ENCODE measurements at regions of chr20 and their contacts with region 1.

Region 1: GRCh38 chr20:58149437-58150105 is 78.9 kb downstream of the ANKRD60 start:
- DNase-seq: no peak
- H3K4me3 ChIP-seq: no peak overlapping the region
- H3K27ac ChIP-seq: peak overlapping the region; percentile 65 to 93
- H3K4me1 ChIP-seq: peaks cover 14 to 46% of the 10 kb centered on the region in 2 donors
- H3K27me3 ChIP-seq: no peaks in the 10 kb centered on the region
- CTCF ChIP-seq: no peak

Region 2: DNA sequence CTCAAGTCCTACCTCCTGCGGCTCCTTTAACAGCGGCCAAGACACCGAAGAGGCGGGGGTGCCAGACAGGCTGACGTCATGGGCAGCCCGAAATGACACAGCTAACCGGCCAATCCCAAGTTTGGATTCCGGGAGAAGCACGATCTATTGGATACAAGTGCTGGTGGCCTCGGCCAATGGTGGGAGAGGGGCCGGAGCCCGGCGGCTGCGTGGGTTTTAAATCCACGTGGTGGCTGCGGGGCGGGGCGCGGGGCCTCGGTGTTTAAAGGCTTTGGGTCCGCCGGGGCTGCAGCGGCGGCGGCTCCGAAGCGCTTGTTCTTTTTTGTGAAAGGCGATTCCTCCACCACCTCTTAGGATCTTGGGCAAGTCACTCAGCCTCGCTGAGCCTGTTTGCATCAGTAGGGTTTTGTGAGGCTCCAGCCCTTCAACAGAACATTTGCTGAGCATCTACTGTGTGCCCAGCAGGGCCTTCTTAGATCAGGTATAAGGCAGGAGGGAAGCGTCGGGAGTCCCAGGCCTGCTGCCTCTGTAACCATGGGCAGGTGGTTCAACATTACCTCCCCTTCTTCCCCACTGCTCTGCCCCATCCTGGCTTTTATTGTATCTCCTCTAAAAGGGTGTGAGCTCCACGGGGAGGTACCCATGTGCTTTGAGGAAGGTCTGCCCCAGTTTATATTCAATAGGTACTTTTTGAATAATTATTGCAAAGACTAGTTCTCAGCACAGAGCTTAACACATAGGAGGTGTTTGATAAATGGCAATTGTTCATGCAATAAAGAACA is 430.9 kb before region 1 on chr20:
- intact Hi-C with region 1: loop called (anchors 5 kb)
- DNase-seq: peak; percentile 95 to 99
- H3K4me3 ChIP-seq: peak overlapping the region; percentile 38 to 44
- H3K27ac ChIP-seq: peak overlapping the region; percentile 52 to 53
- H3K4me1 ChIP-seq: peaks cover 29 to 53% of the 10 kb centered on the region in 2 donors
- H3K27me3 ChIP-seq: no peaks in the 10 kb centered on the region
- CTCF ChIP-seq: no peak

Region 3: DNA sequence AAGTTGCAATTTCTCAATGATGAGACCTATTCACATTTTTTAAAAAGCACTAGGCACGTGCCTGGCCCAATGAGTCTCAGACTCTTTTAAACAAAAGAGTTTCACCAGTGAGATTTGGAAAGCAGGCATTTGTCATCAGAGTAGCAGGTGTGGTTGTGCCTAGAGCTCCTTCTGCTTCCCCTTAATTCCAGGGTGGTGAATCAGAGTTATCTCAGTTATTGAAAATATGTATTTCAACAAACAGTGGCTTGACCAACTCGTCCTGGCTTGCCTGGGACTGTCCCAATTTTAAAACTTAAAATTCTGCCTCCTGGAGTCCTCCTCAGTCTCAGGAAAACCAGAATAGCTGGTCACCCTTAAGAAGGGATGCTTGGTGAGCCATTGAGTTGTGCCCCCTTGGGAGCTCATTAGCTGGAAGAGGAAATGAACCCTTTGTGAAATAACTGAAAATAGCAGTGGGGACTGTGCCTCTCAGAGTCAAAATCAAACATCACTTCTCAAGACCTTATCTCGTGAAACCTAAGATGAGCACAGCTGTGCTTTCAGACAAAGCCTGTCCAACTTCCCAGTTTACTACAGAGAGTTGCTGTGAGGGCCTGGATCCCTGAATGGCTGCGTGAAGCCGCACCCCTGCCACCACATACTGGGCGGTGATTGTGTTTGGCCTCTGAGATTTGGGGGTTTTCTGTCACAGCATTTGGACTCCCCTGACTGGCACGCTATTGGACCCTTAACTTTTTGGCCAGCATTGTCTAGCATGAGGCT is 37.4 kb before region 1 on chr20:
- intact Hi-C with region 1: loop called (anchors 2 kb)
- DNase-seq: no peak
- H3K4me3 ChIP-seq: no peak overlapping the region
- H3K27ac ChIP-seq: peak overlapping the region; percentile 35 to 63
- H3K4me1 ChIP-seq: peaks cover 3 to 14% of the 10 kb centered on the region in 2 donors
- H3K27me3 ChIP-seq: no peaks in the 10 kb centered on the region
- CTCF ChIP-seq: no peak

Region 4: DNA sequence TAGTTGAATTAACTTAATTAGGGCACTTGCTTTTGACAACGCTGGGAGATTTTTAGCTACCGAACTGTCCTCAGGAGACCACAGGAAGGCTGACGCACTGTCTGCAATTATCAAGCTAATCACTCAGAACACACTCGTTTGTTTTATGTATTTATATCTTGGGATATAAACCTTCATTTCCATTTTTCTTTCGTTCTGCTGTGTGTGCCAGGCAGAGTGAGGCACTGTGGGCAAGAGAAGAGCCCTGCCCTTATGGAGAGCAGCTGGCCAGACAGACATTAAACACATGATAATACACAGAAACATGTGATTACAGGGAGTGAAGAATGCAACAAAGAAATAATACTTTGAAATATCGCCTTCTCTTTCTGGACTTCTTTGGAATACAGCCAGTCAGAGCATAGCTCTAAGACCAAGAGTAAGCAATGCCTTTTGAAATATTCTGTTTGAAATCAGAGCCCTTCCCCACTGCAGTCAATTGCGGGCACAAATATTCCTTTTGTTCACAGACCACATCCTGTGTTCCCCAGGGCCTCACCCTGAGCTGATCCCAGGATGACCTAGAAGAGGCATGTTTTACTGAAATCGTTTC is 17.9 kb before region 1 on chr20:
- intact Hi-C with region 1: loop called (anchors 2 kb)
- DNase-seq: no peak
- H3K4me3 ChIP-seq: peak overlapping the region in 1 of 2 donors; percentile 13
- H3K27ac ChIP-seq: peak overlapping the region; percentile 77 to 89
- H3K4me1 ChIP-seq: peaks cover 14 to 68% of the 10 kb centered on the region in 2 donors
- H3K27me3 ChIP-seq: no peaks in the 10 kb centered on the region
- CTCF ChIP-seq: no peak